Activated B cell treated with CpG ODN at 0.5 μM for 24 hours (primary cell): ENCODE measurements at regions of chr1 and their contacts with region 1.

Region 1: GRCh38 chr1:145996433-145997015 is at the start of gene TXNIP:
- DNase-seq: peak; percentile 82
- ATAC-seq: peak; percentile 85
- H3K4me3 Mint-ChIP-seq: peak within 1 kb of the TSS; percentile 88
- H3K27ac Mint-ChIP-seq: peak within 1 kb of the TSS; percentile 97
- H3K4me1 Mint-ChIP-seq: peaks cover 74% of the 10 kb centered on the region
- H3K27me3 Mint-ChIP-seq: no peaks in the 10 kb centered on the region
- CTCF ChIP-seq: no peak
- total RNA-seq, gene TXNIP: 300 and 306 TPM in 2 replicates

Region 2: DNA sequence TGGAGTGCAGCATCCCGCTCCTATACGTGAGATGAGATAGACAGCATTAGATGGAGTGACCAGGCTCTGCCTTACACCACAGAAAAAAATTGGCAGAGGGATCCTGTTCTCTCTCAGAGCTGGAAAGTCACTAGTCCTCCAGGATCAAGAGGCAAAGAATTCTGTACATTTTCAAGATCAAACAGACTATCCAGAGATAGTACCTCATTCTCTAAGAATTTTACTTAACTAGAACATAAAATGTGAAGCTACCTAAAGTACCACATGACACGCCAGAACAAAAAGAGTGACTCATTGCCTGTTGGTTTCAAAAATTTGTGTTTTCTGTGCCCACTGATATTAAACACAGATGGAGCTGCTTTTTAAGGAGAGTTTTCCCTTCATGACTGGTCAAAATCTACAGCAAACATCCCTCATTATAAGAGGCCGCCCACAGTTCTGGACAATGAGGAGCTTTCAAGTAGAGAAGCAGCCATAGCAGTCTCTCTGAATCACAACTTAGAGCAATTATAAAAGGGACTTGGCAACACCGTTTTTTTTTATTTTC is 245.0 kb before region 1 on chr1:
- CTCF ChIA-PET with region 1: no interaction called
- POLR2A ChIA-PET with region 1: no interaction called
- intact Hi-C with region 1: no loop called
- DNase-seq: no peak
- ATAC-seq: no peak
- H3K4me3 Mint-ChIP-seq: no peak overlapping the region
- H3K27ac Mint-ChIP-seq: no peak overlapping the region
- H3K4me1 Mint-ChIP-seq: no peaks in the 10 kb centered on the region
- H3K27me3 Mint-ChIP-seq: no peaks in the 10 kb centered on the region
- CTCF ChIP-seq: no peak

Region 3: DNA sequence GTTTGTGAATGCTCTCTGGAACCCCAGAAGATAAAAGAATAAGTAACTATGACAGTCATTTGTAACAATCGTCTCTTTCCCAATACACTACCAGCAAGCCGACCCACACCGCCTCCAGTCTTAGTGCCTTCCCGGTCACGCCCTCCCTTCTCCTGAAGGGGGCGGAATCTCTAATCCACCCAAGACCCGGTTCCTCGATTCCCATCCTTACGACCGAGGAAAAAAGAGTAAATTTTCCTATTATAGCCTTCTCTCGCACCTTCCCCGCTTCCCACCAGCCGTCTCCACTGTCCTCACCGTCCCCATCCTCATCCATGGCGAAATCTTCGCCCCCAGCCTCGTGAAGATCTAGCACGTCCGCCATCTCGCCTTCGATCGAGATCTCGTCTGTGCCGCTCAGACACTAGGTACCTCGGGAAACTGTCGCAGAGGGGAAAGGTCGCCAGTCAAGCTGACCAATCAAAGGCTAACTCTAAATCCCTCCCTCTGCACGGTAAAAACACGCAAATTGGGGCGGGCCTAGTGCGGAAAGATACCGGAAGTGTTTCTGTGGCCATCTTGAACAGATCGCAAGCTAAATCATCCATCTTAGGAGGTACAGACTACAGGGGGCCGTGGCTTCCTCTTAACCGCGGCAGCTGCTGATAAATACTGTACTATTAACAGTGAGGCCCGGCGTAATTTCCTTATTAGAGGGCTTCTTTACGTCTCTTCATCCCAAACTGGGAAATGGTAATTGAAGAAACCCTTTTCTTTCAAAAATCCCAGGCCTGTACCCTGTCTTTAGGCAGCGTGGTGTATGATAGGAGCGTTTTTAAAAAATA is 69.2 kb before region 1 on chr1 and contains the start of gene RBM8A:
- CTCF ChIA-PET with region 1: no interaction called
- POLR2A ChIA-PET with region 1: interaction called, 26 read pairs
- intact Hi-C with region 1: loop called (anchors 1 kb)
- DNase-seq: peak; percentile 77
- ATAC-seq: peak; percentile 97
- H3K4me3 Mint-ChIP-seq: no peak within 1 kb of the TSS
- H3K27ac Mint-ChIP-seq: peak within 1 kb of the TSS; percentile 74
- H3K4me1 Mint-ChIP-seq: peaks cover 15% of the 10 kb centered on the region
- H3K27me3 Mint-ChIP-seq: no peaks in the 10 kb centered on the region
- CTCF ChIP-seq: no peak
- total RNA-seq, gene RBM8A: 178 and 201 TPM in 2 replicates

Region 4: DNA sequence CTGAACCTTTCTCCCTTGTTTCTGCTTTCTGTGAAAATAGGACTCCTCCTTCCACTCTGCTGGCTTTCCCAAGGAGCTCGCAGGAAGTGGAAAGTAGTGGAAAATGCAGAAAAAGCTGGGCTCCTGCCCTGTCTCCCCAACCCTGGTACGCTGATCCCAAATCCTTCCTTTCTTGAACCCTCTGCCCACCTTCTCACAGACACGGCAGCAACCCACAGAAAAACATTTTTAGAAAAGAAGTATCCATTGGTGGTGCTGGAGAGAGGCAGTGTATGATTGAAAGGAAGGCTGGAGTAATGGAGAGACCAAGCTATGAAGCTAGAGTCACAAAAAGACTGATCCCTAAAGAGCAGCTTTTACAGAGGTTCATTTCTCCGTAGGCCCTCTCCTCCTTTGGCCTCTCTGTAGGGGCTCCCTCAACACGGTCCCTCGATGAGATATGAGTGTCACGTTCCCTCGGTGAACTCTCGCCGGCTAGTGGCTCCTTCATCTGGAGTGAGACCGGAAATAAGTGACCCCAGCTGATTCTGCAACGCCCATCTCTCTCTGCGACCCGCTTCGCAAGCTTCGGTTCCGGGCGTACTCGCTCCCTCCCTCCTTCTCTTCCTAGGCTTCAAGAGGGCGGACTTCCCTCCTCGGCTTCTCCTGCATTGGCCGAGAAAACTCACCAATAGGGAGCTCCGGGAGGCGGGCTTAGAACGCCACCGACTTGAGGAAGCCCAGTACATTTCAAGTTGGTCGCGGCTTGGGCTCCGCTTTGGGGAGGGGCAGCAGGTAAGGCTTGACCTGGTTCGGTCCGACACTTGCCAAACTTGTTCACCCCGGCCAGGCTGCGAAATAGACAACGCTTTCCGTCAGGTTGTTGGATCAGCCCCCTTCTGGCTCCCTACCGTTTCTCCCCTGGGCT is 32.3 kb before region 1 on chr1 and contains the starts of genes ANKRD34A and POLR3GL:
- CTCF ChIA-PET with region 1: no interaction called
- POLR2A ChIA-PET with region 1: interaction called, 34 read pairs
- intact Hi-C with region 1: loop called (anchors 5 kb)
- DNase-seq: peak; percentile 78
- ATAC-seq: peak; percentile 88
- H3K4me3 Mint-ChIP-seq: peak within 1 kb of the TSS; percentile 97
- H3K27ac Mint-ChIP-seq: peak within 1 kb of the TSS; percentile 96
- H3K4me1 Mint-ChIP-seq: peaks cover 52% of the 10 kb centered on the region
- H3K27me3 Mint-ChIP-seq: no peaks in the 10 kb centered on the region
- CTCF ChIP-seq: no peak
- total RNA-seq, gene ANKRD34A: 1.4 and 2.4 TPM in 2 replicates
- total RNA-seq, gene POLR3GL: 22.7 and 23.7 TPM in 2 replicates

Region 5: GRCh38 chr1:146036965-146037646 is 40.6 kb after region 1 on chr1:
- CTCF ChIA-PET with region 1: no interaction called
- POLR2A ChIA-PET with region 1: interaction called, 33 read pairs
- intact Hi-C with region 1: loop called (anchors 2 kb)
- DNase-seq: peak; percentile 61
- ATAC-seq: peak; percentile 56
- H3K4me3 Mint-ChIP-seq: peak overlapping the region; percentile 99
- H3K27ac Mint-ChIP-seq: peak overlapping the region; percentile 98
- H3K4me1 Mint-ChIP-seq: peaks cover 43% of the 10 kb centered on the region
- H3K27me3 Mint-ChIP-seq: peaks cover 2% of the 10 kb centered on the region
- CTCF ChIP-seq: no peak

Region 6: DNA sequence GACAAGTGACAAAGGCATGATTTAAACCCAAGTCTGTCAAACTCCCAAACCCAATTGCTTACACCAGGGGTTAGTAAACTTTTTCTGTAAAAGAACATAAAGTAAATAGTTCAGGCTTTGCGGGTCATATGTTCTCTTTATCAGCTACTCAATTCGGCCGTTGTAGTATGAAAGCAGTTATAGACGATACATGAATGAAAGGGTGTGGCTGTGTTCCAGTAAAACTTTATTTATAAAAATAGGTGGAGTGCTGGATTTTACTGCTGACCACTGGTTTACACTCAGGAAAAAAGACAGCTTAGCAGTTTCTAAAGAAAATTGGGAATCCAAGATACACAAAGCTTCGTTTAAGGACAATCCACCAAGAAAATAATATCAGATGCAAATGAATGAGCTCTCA is 1420.5 kb after region 1 on chr1:
- CTCF ChIA-PET with region 1: no interaction called
- POLR2A ChIA-PET with region 1: no interaction called
- intact Hi-C with region 1: no loop called
- DNase-seq: no peak
- ATAC-seq: no peak
- H3K4me3 Mint-ChIP-seq: no peak overlapping the region
- H3K27ac Mint-ChIP-seq: no peak overlapping the region
- H3K4me1 Mint-ChIP-seq: no peaks in the 10 kb centered on the region
- H3K27me3 Mint-ChIP-seq: peaks cover 21% of the 10 kb centered on the region
- CTCF ChIP-seq: no peak